ENCODE measurements at regions of chr16 and their contacts with region 1.

Region 1: GRCh38 chr16:66344533-66345145 is 21.9 kb upstream of the CDH5 start:
- DNase-seq: peak in 2 of 3 donors; percentile 42
- H3K4me3 ChIP-seq: no peak overlapping the region
- H3K4me3 Mint-ChIP-seq: no peak overlapping the region
- H3K27ac ChIP-seq: no peak overlapping the region
- H3K27ac Mint-ChIP-seq: no peak overlapping the region
- H3K4me1 ChIP-seq: no peaks in the 10 kb centered on the region
- H3K4me1 Mint-ChIP-seq: peaks cover 5% of the 10 kb centered on the region
- H3K27me3 ChIP-seq: no peaks in the 10 kb centered on the region
- H3K27me3 Mint-ChIP-seq: peaks cover 10 to 24% (median 12%) of the 10 kb centered on the region in 3 donors
- CTCF ChIP-seq: peak; percentile 95

Region 2: DNA sequence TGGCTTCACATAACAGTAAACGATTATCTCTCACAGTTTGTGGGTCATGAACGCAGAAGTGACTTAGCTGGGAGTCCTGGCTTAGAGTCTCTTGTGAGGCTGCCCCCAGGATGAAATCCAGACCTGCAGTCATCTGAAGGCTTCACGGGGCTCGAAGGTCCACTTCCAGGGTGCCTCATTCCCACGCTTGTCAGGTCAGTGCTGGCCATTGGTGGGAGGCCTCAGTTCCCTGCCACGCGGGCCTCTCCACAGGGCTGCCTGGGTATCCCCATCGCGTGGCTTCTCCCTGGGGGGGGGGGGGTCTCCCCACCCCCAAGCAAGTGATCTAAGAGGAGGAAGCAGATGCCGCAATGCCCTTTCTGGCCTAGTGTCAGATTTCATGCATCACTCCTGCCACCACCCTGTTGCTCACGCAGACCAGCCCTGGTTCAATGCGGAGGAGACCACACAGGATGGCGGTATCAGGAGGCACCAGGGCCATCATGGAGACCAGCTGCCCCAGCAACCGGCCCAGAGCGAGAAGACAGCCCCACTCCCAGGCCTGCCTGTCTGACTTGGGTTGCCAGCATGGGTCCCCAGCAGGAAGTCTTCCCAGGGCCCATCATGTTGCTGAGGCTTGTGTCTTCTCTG is 55.5 kb before region 1 on chr16:
- intact Hi-C with region 1: loop called in 1 of 2 experiments (anchors 10 kb)
- DNase-seq: no peak
- H3K4me3 ChIP-seq: no peak overlapping the region
- H3K4me3 Mint-ChIP-seq: no peak overlapping the region
- H3K27ac ChIP-seq: no peak overlapping the region
- H3K27ac Mint-ChIP-seq: no peak overlapping the region
- H3K4me1 ChIP-seq: no peaks in the 10 kb centered on the region
- H3K4me1 Mint-ChIP-seq: no peaks in the 10 kb centered on the region
- H3K27me3 ChIP-seq: no peaks in the 10 kb centered on the region
- H3K27me3 Mint-ChIP-seq: peaks cover 1 to 8% (median 2%) of the 10 kb centered on the region in 3 donors
- CTCF ChIP-seq: no peak

Region 3: GRCh38 chr16:66406534-66407221 is 62.0 kb after region 1 on chr16:
- intact Hi-C with region 1: no loop called
- DNase-seq: peak; percentile 66 to 77 (median 76)
- H3K4me3 ChIP-seq: peak overlapping the region; percentile 43 to 80 (median 44)
- H3K4me3 Mint-ChIP-seq: peak overlapping the region; percentile 79 to 91
- H3K27ac ChIP-seq: no peak overlapping the region
- H3K27ac Mint-ChIP-seq: peak overlapping the region in 2 of 7 donors; percentile 2 to 43
- H3K4me1 ChIP-seq: peaks cover 18 to 19% of the 10 kb centered on the region in 2 donors
- H3K4me1 Mint-ChIP-seq: peaks cover 21% of the 10 kb centered on the region
- H3K27me3 ChIP-seq: peaks cover 0 to 5% of the 10 kb centered on the region in 2 donors
- H3K27me3 Mint-ChIP-seq: peaks cover 7 to 13% (median 11%) of the 10 kb centered on the region in 3 donors
- CTCF ChIP-seq: peak; percentile 93

Measured in CD14-positive monocyte (primary cell).